ENCODE measurements at regions of chr3 and their contacts with region 1.

Region 1: GRCh38 chr3:64030741-64031140 is 7.4 kb upstream of the PSMD6 start:
- DNase-seq: peak; percentile 81
- H3K4me3 Mint-ChIP-seq: peak overlapping the region; percentile 49
- H3K27ac Mint-ChIP-seq: no peak overlapping the region
- H3K4me1 Mint-ChIP-seq: peaks cover 10% of the 10 kb centered on the region
- H3K27me3 Mint-ChIP-seq: peaks cover 36% of the 10 kb centered on the region
- CTCF ChIP-seq: peak; percentile 86

Region 2: GRCh38 chr3:64224826-64225610 is 194.3 kb after region 1 on chr3 and contains the start of gene PRICKLE2:
- CTCF ChIA-PET with region 1: no interaction called
- intact Hi-C with region 1: loop called (anchors 5 kb)
- DNase-seq: peak; percentile 73
- H3K4me3 Mint-ChIP-seq: peak within 1 kb of the TSS; percentile 65
- H3K27ac Mint-ChIP-seq: peak within 1 kb of the TSS; percentile 88
- H3K4me1 Mint-ChIP-seq: peaks cover 31% of the 10 kb centered on the region
- H3K27me3 Mint-ChIP-seq: no peaks in the 10 kb centered on the region
- CTCF ChIP-seq: no peak
- total RNA-seq, gene PRICKLE2: 1.9 and 4.0 TPM in 2 replicates

Region 3: DNA sequence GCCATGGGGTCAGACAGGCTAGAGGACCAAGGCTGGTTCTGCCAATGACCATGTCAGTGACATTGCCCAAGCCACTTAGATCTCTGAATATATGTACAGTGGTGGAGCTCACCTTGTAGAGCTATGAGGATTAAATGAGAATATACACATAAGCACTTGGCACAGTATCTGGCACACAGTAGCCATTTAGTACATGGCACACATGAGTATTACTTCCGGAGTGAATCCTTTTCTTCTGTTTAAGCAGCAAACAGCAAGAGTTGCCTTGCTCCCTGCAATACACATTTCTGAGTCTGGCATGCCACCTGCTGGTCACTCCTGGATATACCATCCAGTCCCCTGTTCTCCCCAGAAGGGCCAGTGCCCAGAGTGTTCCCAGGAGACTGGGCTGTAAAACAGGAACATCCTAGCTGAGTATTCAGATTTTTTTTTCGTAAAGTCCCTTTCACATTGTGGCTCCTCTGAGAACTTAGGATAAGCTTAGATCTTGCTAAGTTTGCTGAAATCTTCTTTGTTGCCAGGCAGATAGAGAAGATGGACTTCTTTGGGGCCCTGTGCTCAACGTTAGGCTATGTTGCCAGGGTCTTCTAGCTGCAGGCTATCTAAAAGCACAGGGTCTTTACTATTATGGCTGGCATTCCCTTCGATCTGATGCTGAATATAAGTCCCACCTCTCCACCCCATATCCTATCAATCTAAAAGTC is 453.7 kb after region 1 on chr3:
- CTCF ChIA-PET with region 1: interaction called, 5 read pairs
- intact Hi-C with region 1: loop called (anchors 1 kb)
- DNase-seq: peak; percentile 83
- H3K4me3 Mint-ChIP-seq: no peak overlapping the region
- H3K27ac Mint-ChIP-seq: no peak overlapping the region
- H3K4me1 Mint-ChIP-seq: no peaks in the 10 kb centered on the region
- H3K27me3 Mint-ChIP-seq: peaks cover 25% of the 10 kb centered on the region
- CTCF ChIP-seq: peak; percentile 78